ENCODE measurements at regions of chr6 and their contacts with region 1.

Region 1: GRCh38 chr6:41597246-41598000 is 40.8 kb upstream of the MDFI start:
- DNase-seq: no peak
- H3K4me3 ChIP-seq: no peak overlapping the region
- H3K27ac ChIP-seq: no peak overlapping the region
- H3K4me1 ChIP-seq: peaks cover 0 to 2% (median under 1%) of the 10 kb centered on the region in 4 experiments
- H3K27me3 ChIP-seq: no peaks in the 10 kb centered on the region

Region 2: DNA sequence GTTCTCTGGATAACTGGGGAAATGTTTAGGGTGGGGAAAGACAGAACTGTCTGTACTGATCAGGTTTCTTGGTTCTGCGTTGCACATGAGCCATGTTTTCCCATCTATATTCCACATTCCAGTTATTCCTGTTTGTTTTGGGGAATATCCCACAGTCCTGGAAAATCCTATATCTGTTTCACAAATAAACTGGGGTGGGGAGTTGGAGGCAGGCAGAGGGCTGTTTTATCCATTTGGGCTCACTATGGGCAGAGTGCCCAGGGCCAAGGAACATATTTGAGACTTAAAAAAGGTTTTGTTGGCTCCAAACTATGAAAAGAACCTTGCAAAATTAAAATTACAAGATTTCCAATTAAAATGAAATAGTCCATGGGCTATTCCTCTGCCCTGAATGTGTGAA is 29.7 kb before region 1 on chr6:
- CTCF ChIA-PET with region 1: no interaction called
- POLR2A ChIA-PET with region 1: no interaction called
- DNase-seq: no peak
- H3K4me3 ChIP-seq: no peak overlapping the region
- H3K27ac ChIP-seq: no peak overlapping the region
- H3K4me1 ChIP-seq: peaks cover 0 to under 1% (median 0%) of the 10 kb centered on the region in 4 experiments
- H3K27me3 ChIP-seq: no peaks in the 10 kb centered on the region

Region 3: DNA sequence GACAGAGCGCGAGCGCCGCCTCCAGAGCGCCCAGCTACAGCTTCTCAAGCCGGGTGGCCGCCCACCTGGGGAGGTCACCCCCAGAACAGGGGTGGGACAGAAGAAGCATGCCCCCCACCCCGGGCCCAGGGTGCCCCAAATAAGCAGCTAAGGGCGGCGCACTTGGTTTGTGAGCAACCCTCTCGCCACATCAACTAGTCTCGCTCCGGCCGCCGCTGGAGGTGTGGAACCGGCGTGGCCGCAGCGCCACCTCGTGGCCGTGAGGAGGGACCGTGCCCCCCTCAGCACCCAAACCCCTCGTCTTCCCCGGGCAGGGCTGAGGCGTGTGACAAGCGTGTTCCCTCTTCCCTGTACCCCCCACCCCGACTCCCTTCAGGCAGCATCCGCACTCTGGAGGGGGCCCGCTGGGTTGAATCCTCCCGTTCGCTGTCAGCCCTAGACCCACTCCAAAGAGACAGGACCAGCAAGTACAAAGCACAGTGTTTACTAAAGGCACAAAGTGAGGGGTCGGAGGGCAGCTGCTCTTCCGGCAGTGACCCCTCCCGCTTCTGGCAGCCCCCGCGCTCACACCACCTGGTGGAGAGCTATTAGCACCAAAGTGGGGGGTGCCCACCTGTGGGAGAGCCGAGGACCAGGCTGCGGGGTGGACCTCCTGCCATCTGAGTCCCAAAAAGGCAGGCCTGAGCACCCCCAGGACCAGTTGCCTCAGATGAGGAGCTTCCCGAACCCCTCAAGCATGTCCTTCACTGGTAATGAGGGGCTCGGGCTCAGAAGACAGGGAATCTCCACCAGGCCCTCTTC is 86.3 kb after region 1 on chr6:
- CTCF ChIA-PET with region 1: interaction called, 84 read pairs
- POLR2A ChIA-PET with region 1: interaction called, 4 read pairs
- DNase-seq: peak; percentile 78 to 84 (median 82)
- H3K4me3 ChIP-seq: peak overlapping the region in 5 of 7 experiments; percentile 34 to 76 (median 69)
- H3K27ac ChIP-seq: peak overlapping the region; percentile 5 to 15
- H3K4me1 ChIP-seq: peaks cover 0 to 19% (median 17%) of the 10 kb centered on the region in 4 experiments
- H3K27me3 ChIP-seq: no peaks in the 10 kb centered on the region

Region 4: GRCh38 chr6:42158011-42158410 is 560.6 kb after region 1 on chr6:
- CTCF ChIA-PET with region 1: no interaction called
- POLR2A ChIA-PET with region 1: no interaction called
- DNase-seq: no peak
- H3K4me3 ChIP-seq: no peak overlapping the region
- H3K27ac ChIP-seq: no peak overlapping the region
- H3K4me1 ChIP-seq: no peaks in the 10 kb centered on the region
- H3K27me3 ChIP-seq: peaks cover 0 to 3% (median 0%) of the 10 kb centered on the region in 5 experiments

Measured in common myeloid progenitor, CD34-positive (primary cell).